ENCODE measurements at regions of chr6 and their contacts with region 1.

Region 1: DNA sequence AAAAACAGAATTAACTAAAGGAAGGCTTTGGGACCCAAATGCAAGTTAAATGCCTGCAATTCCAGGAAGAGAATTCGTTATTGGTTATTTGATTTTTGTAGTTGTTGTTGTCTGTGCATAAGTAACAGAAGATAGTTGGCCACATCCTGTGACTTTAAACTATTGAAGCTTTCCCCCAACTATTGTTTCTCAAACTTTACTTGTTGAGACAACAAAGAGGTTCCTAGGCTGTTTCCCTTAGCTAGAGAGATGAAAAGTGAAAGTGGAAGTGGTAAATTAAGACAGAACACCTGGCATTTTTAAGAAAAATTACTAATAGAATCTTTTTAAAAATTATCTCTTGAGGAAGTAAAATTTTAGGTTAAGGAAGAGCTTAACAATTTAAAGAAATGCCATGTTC is 525.2 kb downstream of the PKHD1 start:
- DNase-seq: no peak
- ATAC-seq: no peak
- H3K4me3 ChIP-seq: no peak overlapping the region
- H3K27ac ChIP-seq: no peak overlapping the region
- H3K4me1 ChIP-seq: no peaks in the 10 kb centered on the region
- H3K27me3 ChIP-seq: peaks cover 0 to 4% (median 0%) of the 10 kb centered on the region in 7 donors
- CTCF ChIP-seq: no peak

Region 2: DNA sequence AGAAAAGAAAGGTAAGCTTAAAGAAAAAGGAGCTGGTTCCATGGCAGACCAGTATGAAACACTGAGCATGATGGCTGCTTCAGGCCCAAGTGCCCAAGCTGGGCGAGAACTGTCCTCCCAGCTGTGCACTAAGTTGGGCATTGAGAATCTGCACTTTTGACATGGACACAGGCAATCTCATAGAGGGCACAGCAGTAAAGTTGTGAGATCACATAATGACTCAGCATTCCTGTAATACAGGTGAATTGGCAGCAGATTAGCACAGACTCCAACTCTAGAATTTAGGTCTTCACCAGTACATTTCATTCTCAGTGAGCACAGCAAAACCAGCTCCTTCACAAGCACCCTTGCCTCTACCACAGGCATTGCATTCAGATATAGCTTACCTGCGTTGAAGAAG is 181.8 kb after region 1 on chr6:
- intact Hi-C with region 1: loop called in 1 of 10 experiments (anchors 10 kb)
- DNase-seq: no peak
- ATAC-seq: no peak
- H3K4me3 ChIP-seq: no peak overlapping the region
- H3K27ac ChIP-seq: no peak overlapping the region
- H3K4me1 ChIP-seq: no peaks in the 10 kb centered on the region
- H3K27me3 ChIP-seq: no peaks in the 10 kb centered on the region
- CTCF ChIP-seq: no peak

Measured in heart right ventricle (tissue), 16 donors.